Right ventricle myocardium inferior (tissue), 1 donor: ENCODE measurements at regions of chr1 and their contacts with region 1.

Region 1: GRCh38 chr1:241895013-241895412 is 47.0 kb downstream of the EXO1 start:
- DNase-seq: no peak
- ATAC-seq: no peak

Region 2: GRCh38 chr1:241847796-241848685 is 47.0 kb before region 1 on chr1 and contains the start of gene EXO1:
- intact Hi-C with region 1: no loop called
- DNase-seq: peak; percentile 94
- ATAC-seq: peak; percentile 98
- total RNA-seq, gene EXO1: 0.65 TPM

Region 3: DNA sequence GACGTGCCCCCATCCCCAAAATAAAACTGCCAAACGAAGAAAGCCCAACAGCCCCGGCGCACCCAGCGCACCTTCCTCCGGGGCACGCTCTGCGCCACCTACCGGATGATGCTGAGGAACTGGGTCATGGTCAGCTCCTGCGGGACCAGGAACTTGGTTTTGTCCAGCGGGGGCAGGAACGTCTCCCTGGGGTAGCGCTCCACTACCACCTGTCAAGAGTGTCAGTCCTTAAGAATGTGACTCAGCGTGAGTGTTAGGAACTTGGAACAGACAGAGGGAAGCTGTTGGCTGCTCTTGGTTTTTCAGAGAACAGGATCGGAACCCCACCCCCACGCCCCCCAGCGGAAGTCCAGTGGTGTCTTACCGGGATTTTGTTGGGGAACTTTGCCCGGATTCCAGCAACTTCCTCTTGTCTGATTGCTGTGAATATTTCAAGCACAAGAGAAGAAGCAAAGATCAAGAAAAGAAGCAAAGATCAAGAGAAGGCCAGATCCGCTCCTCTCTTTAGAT is 103.5 kb after region 1 on chr1:
- intact Hi-C with region 1: loop called (anchors 5 kb)
- DNase-seq: peak; percentile 79
- ATAC-seq: peak; percentile 88